Activated CD4-positive, alpha-beta T cell treated with anti-CD3 and anti-CD28 coated beads, Interleukin-2, amount 10 ng/mL, durations not matched to agents 24 days and 14 days (primary cell): ENCODE measurements at regions of chr10 and their contacts with region 1.

Region 1: DNA sequence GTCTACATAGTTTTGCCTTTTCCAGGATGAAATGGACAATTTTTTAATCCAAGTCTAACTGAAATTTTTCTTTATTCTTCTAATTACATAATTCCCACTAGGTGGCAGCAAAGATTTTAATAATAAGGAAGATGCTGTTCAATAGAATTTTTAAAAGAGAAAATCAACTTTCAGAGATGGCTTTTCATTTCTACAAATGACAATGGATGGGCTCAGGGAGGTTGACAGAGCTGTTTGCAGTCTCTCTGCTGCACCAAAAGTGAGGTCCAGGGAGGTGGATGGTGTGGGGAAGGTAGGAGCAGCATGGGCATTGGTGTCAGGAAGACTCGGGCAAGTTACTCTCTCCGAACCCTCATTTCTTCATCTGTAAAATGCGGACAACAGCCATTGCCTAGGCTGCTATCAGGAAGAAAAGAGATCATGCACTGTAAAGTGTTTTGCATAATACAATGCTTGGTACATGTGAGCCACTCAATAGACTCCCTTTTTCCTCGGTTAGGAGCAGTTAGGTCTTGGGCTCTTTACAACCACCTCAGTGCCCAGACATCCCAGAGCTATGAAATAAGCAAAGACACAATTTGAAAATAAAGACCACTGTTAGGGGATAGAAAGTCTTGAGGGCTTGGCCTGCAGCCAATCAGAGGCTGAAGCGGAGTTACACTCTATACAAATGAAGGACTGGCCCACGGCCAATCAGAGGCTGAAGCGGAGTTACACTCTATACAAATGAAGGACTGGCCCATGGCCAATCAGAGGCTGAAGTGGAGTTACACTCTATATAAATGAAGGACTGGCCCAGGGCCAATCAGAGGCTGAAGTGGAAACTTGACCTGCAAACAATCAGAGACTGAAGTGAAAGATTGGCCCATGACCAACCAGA is 107.1 kb downstream of the ABLIM1 start:
- DNase-seq: no peak
- H3K4me3 Mint-ChIP-seq: no peak overlapping the region
- H3K27ac Mint-ChIP-seq: no peak overlapping the region
- H3K4me1 Mint-ChIP-seq: peaks cover 18% of the 10 kb centered on the region
- H3K27me3 Mint-ChIP-seq: peaks cover 2% of the 10 kb centered on the region

Region 2: DNA sequence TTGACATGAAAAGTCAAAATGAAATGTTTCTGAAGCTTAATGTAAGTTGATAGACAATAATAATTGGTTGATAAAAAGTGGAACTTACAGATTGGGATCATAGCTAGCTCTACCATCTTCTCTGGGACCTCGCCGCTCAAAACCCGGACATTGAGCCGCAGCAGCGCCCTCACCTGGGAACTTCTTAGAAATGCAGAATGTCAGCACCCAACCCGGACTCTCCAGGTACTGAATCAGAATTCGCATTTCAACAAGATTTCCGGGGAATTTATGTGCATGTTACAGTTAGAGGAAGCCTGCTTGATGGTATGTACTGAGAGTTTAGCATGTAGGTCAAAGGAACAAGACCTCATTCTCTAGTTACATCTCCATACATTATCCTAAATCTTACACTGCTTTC is 143.8 kb after region 1 on chr10:
- intact Hi-C with region 1: loop called (anchors 2 kb)
- DNase-seq: peak; percentile 69
- H3K4me3 Mint-ChIP-seq: no peak overlapping the region
- H3K27ac Mint-ChIP-seq: no peak overlapping the region
- H3K4me1 Mint-ChIP-seq: peaks cover 5% of the 10 kb centered on the region
- H3K27me3 Mint-ChIP-seq: peaks cover 21% of the 10 kb centered on the region

Region 3: DNA sequence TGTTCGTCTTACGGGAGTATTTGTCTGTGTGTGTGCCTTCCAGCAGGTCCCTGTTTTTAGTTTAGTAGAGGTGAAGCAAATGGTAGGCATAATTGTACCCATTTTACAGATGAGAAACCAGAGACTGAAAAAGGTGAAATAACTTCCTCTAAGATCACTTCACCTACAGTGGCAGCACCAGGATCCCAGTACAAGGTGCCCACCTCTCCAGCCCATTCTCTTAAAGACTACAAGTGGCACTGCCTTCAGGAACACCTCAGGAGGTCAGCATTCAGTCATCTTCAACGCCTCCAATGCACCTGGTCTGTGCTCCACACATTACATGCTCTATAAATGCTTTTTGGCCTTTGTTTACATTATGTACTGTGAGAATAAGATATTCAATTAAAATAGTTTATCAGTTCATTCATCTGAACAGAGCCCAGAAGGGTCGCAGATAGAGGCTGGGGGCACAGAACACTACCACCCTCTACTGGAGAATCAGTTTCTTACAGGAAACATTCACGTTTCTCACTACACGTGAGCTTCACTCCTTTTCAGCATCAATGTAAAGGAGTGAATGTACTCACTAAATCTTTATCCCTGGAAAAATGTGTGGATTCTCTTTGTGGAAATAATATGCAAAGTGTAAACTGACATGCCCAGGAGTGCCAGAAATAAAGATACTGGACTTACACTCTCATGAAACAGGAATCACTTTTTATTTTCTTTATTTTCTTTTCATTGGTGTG is 152.5 kb after region 1 on chr10:
- intact Hi-C with region 1: loop called (anchors 1 kb)
- DNase-seq: peak; percentile 65
- H3K4me3 Mint-ChIP-seq: no peak overlapping the region
- H3K27ac Mint-ChIP-seq: no peak overlapping the region
- H3K4me1 Mint-ChIP-seq: no peaks in the 10 kb centered on the region
- H3K27me3 Mint-ChIP-seq: peaks cover 34% of the 10 kb centered on the region

Region 4: GRCh38 chr10:115129752-115130151 is 578.8 kb after region 1 on chr10:
- intact Hi-C with region 1: loop called (anchors 5 kb)
- DNase-seq: no peak
- H3K4me3 Mint-ChIP-seq: no peak overlapping the region
- H3K27ac Mint-ChIP-seq: no peak overlapping the region
- H3K4me1 Mint-ChIP-seq: no peaks in the 10 kb centered on the region
- H3K27me3 Mint-ChIP-seq: no peaks in the 10 kb centered on the region